PC-9 (cell line): ENCODE measurements at regions of chr5 and their contacts with region 1.

Region 1: DNA sequence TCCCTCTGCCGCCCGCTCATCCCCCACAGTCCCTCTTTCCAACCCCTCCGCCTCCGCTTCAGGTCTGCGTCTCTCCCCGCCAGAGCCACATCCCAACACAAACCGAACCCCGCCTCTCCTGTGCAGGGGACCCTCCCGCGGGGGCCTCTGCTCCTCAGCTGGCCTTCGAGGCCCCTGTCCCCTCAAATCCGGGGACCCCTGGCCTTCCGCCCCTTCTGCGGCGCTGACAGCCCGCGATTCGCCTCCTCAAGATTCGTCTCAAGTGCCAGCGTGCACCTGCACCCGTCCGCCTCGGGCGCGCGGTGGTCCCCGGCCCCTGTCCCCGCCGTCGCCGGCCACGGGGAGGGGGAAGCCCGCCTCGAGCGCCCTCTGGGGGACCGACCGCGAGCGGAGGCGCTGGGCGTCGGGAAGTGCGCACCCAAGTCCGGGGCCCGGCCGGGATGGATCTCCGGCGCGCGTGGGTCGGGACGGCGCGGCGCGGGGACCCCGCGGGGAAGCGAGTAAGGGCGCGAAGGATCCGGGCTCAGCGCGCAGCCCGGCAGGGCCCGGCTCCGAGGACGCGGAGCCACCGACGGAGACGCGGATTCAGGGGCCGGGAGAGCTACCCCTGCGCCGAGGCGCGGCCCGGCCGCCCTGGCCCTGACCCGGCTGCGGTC is 631 bp downstream of the FLT4 start:
- DNase-seq: no peak
- H3K4me3 ChIP-seq: no peak overlapping the region
- H3K27ac ChIP-seq: no peak overlapping the region
- H3K4me1 ChIP-seq: no peaks in the 10 kb centered on the region
- H3K27me3 ChIP-seq: peaks cover 76% of the 10 kb centered on the region
- CTCF ChIP-seq: no peak

Region 2: GRCh38 chr5:180494060-180494509 is 154.7 kb before region 1 on chr5 and contains the start of gene CNOT6:
- CTCF ChIA-PET with region 1: no interaction called
- POLR2A ChIA-PET with region 1: no interaction called
- intact Hi-C with region 1: no loop called
- DNase-seq: peak; percentile 71 to 96
- H3K4me3 ChIP-seq: peak within 1 kb of the TSS; percentile 86
- H3K27ac ChIP-seq: peak within 1 kb of the TSS; percentile 64
- H3K4me1 ChIP-seq: peaks cover 21% of the 10 kb centered on the region
- H3K27me3 ChIP-seq: no peaks in the 10 kb centered on the region
- CTCF ChIP-seq: no peak
- total RNA-seq, gene CNOT6: 43.8 and 48.8 TPM in 2 replicates

Region 3: GRCh38 chr5:180600554-180601041 is 48.2 kb before region 1 on chr5:
- CTCF ChIA-PET with region 1: interaction called, 10 read pairs
- POLR2A ChIA-PET with region 1: no interaction called
- intact Hi-C with region 1: no loop called
- DNase-seq: no peak
- H3K4me3 ChIP-seq: no peak overlapping the region
- H3K27ac ChIP-seq: no peak overlapping the region
- H3K4me1 ChIP-seq: no peaks in the 10 kb centered on the region
- H3K27me3 ChIP-seq: peaks cover 38% of the 10 kb centered on the region
- CTCF ChIP-seq: no peak

Region 4: DNA sequence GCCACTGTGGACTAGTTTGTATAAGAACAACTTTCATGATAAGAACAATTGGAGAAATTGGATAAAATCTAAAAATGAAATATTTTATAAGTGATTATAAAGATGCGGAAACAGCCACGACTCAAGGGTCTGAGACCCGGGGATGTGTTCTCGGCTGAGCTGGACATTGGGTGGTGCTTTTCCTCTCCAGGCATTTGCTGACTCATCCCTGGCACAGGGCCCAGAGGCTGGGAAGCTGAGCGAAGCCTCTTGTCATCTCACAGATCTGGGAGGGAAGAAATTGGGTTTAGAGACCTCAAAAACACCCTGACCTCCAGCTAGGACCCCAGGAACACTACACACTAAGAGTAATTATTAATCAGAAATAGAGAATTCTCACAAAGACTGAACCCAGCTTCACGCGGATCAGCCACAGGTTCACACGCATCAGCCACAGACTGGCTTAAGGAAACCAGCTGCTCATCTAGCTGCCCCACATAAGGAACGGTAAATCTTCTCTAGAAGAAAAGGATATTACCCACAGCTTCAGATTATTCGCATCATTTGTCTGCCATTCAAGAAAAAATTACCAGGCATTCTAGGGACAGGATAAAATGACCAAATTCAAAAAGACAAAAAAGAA is 485.0 kb after region 1 on chr5:
- CTCF ChIA-PET with region 1: no interaction called
- POLR2A ChIA-PET with region 1: no interaction called
- intact Hi-C with region 1: no loop called
- DNase-seq: peak; percentile 72 to 80
- H3K4me3 ChIP-seq: peak overlapping the region; percentile 7; the same call in 1 of the 2 replicates
- H3K27ac ChIP-seq: peak overlapping the region; percentile 73
- H3K4me1 ChIP-seq: peaks cover 27% of the 10 kb centered on the region
- H3K27me3 ChIP-seq: no peaks in the 10 kb centered on the region
- CTCF ChIP-seq: no peak